T-cell (primary cell): ENCODE measurements at regions of chr14 and their contacts with region 1.

Region 1: DNA sequence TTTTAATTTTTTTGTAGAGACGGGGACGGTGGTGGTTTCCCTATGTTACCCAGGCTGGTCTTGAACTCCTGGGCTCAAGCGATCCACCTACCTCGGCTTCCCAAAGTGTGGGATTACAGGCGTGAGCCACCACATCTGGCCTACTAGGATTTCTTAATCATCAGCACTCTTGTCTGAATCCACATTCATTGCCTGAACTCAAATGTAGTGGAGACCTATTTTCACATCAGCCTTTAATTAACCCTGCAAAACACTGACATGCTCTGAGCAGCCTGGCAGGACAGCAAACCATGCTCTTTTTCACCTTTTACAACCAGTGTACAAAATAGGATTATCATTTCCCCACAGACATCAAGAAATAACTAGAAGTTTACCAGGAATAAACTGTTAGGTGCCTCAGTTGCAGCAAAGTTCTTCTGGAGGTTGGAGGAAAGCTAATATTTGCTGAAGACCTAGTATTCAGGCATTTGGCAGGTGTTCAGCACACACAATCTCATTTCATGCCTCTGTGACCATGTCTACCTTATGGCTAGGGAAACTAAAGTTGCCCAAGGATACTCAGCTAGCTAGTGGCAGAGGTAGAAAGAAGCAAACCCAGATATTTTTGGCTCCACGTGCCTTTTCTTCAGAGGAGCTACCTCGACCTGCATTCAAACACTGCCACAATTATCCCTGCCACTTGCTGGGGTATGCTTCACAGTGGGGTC is 37.7 kb downstream of the CFL2 start:
- DNase-seq: no peak
- ATAC-seq: no peak
- H3K4me3 ChIP-seq: no peak overlapping the region
- H3K4me3 Mint-ChIP-seq: no peak overlapping the region
- H3K27ac ChIP-seq: no peak overlapping the region
- H3K27ac Mint-ChIP-seq: no peak overlapping the region
- H3K4me1 ChIP-seq: no peaks in the 10 kb centered on the region
- H3K4me1 Mint-ChIP-seq: no peaks in the 10 kb centered on the region
- H3K27me3 ChIP-seq: no peaks in the 10 kb centered on the region
- H3K27me3 Mint-ChIP-seq: no peaks in the 10 kb centered on the region

Region 2: GRCh38 chr14:34714320-34715126 is 37.9 kb after region 1 on chr14 and contains the start of gene CFL2:
- CTCF ChIA-PET with region 1: interaction called, 8 to 10 read pairs
- POLR2A ChIA-PET with region 1: interaction called in 1 of 2 experiments, 3 read pairs
- DNase-seq: peak in 34 of 35 experiments; percentile 45 to 88 (median 68)
- ATAC-seq: peak; percentile 90 to 94 (median 90)
- H3K4me3 ChIP-seq: peak within 1 kb of the TSS; percentile 64 to 79
- H3K4me3 Mint-ChIP-seq: peak within 1 kb of the TSS; percentile 88 to 92 (median 88)
- H3K27ac ChIP-seq: peak within 1 kb of the TSS; percentile 72
- H3K27ac Mint-ChIP-seq: peak within 1 kb of the TSS; percentile 86 to 92
- H3K4me1 ChIP-seq: peaks cover 8 to 10% of the 10 kb centered on the region in 2 experiments
- H3K4me1 Mint-ChIP-seq: peaks cover 25 to 33% (median 32%) of the 10 kb centered on the region in 3 donors
- H3K27me3 ChIP-seq: no peaks in the 10 kb centered on the region
- H3K27me3 Mint-ChIP-seq: no peaks in the 10 kb centered on the region
- total RNA-seq, gene CFL2: 10.7 to 27.3 (median 13.9) TPM

Region 3: GRCh38 chr14:34722717-34723545 is 46.3 kb after region 1 on chr14:
- CTCF ChIA-PET with region 1: interaction called, 21 to 24 read pairs
- POLR2A ChIA-PET with region 1: interaction called in 1 of 2 experiments, 5 read pairs
- DNase-seq: peak in 21 of 35 experiments; percentile 3 to 72 (median 15)
- ATAC-seq: peak in 3 of 4 experiments; percentile 34 to 58 (median 49)
- H3K4me3 ChIP-seq: no peak overlapping the region
- H3K4me3 Mint-ChIP-seq: no peak overlapping the region
- H3K27ac ChIP-seq: no peak overlapping the region
- H3K27ac Mint-ChIP-seq: no peak overlapping the region
- H3K4me1 ChIP-seq: peaks cover 0 to 4% of the 10 kb centered on the region in 2 experiments
- H3K4me1 Mint-ChIP-seq: peaks cover 6 to 8% (median 7%) of the 10 kb centered on the region in 3 donors
- H3K27me3 ChIP-seq: no peaks in the 10 kb centered on the region
- H3K27me3 Mint-ChIP-seq: no peaks in the 10 kb centered on the region

Region 4: DNA sequence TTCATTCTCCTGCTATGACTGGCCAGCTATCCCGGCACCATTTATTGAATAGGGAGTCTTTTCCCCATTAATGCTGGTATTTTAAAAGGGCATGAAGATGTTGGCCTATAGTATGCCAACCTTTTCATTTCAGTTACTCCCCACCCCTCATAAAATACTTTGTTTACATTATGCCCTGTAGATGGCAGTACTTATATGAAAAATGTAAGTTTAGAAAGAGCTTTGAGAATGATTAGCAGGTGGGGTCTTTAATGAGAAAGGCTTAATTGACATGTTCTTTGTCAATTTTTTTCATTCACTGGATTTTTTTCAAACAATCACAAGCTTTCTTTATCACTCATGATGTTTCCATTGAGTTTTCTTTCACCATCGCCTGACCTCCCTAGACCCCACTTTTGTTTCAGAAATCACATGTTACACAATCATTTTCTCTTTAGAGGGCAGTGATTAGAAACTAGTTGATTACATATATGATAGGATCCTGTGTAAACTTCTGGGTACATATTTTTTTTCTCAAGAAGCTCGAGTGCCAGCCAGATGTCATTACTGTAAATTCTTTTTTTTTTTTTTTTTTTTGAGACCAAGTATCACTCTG is 552.9 kb after region 1 on chr14:
- CTCF ChIA-PET with region 1: interaction called in 1 of 2 experiments, 12 read pairs
- POLR2A ChIA-PET with region 1: no interaction called
- DNase-seq: peak in 1 of 35 experiments; percentile 47
- ATAC-seq: peak in 2 of 4 experiments; percentile 38 to 55
- H3K4me3 ChIP-seq: no peak overlapping the region
- H3K4me3 Mint-ChIP-seq: no peak overlapping the region
- H3K27ac ChIP-seq: no peak overlapping the region
- H3K27ac Mint-ChIP-seq: no peak overlapping the region
- H3K4me1 ChIP-seq: peaks cover 4 to 10% of the 10 kb centered on the region in 2 experiments
- H3K4me1 Mint-ChIP-seq: peaks cover 19 to 31% (median 20%) of the 10 kb centered on the region in 3 donors
- H3K27me3 ChIP-seq: no peaks in the 10 kb centered on the region
- H3K27me3 Mint-ChIP-seq: no peaks in the 10 kb centered on the region